ENCODE measurements at regions of chr4 and their contacts with region 1.

Region 1: GRCh38 chr4:139416073-139416673 is 37.7 kb upstream of the RAB33B start:
- DNase-seq: peak; percentile 28
- ATAC-seq: peak; percentile 50
- H3K4me3 ChIP-seq: no peak overlapping the region
- H3K27ac ChIP-seq: no peak overlapping the region
- H3K4me1 ChIP-seq: no peaks in the 10 kb centered on the region; the same call in 1 of the 2 replicates
- H3K27me3 ChIP-seq: no peaks in the 10 kb centered on the region
- CTCF ChIP-seq: peak; percentile 63
- EP300 ChIP-seq: no peak
- POLR2A ChIP-seq: no peak
- RAD21 ChIP-seq: no peak

Region 2: DNA sequence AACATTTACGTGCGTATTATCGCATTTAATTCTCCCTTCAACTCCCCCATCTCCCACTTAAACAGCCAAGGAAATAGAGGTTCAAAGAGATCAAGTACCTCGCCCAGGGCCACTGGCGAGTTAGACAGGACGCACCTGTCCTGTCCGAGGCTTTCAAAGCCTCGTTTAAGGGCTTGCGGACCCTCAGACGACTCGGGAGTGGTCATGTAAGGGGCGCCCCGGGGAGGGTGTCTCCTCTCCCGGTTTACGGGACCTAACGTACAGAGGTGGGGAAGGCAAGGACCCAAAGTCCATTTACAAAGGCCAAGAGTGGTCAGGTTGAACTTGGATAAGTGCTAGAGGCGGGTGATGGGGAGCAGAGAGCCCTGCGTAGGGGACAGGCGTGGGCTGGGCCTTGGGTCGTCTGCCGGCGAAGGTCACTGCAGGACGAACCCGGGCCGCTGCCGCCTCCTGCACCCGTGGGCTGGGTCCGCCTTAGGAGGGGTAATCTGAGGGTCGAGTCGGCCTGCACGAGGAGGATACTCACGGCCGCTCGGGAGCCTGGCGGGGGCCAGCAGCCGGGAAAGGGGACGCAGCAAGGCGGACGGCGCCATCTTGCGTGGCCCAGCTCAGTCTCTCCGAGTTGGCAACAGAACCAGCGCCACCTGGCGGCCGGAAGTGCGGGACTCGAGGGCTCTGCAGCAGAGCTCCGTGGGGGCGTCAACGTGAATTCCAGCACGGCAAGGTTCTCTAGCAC is 120.8 kb before region 1 on chr4:
- CTCF ChIA-PET with region 1: no interaction called
- POLR2A ChIA-PET with region 1: no interaction called
- in situ Hi-C with region 1: no loop called
- intact Hi-C with region 1: no loop called
- DNase-seq: peak; percentile 82
- ATAC-seq: peak; percentile 95
- H3K4me3 ChIP-seq: peak overlapping the region; percentile 85 to 93 (median 86)
- H3K27ac ChIP-seq: peak overlapping the region; percentile 92
- H3K4me1 ChIP-seq: peaks cover 54% of the 10 kb centered on the region
- H3K27me3 ChIP-seq: no peaks in the 10 kb centered on the region; a peak in 1 of 5 replicates
- CTCF ChIP-seq: peak; percentile 98
- EP300 ChIP-seq: 0 out of 4 replicates have a peak, but pooled peaks have one; percentile 11 to 41
- POLR2A ChIP-seq: peak; percentile 77 to 79; a peak in 3 of 4 replicates
- RAD21 ChIP-seq: peak; percentile 89

Region 3: DNA sequence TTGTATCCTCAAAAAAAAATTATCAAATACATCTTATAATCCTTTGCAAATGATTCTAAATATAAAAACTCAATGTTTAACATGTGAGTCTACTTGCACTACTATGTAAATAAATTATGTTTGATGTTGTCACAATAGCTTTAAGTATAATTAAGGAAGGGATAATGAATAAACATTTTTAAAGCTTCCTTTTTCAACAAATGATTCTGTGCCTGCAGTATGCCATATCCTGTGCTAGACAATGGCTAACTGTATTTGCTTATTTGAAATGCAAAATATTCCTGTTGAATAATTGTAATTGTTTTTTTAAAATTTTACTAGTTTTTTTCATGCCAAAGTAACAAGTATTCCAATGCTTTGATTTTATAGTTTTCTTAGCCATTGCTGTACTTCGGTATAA is 54.9 kb before region 1 on chr4:
- CTCF ChIA-PET with region 1: no interaction called
- POLR2A ChIA-PET with region 1: no interaction called
- in situ Hi-C with region 1: no loop called
- intact Hi-C with region 1: no loop called
- DNase-seq: no peak
- ATAC-seq: no peak
- H3K4me3 ChIP-seq: no peak overlapping the region
- H3K27ac ChIP-seq: no peak overlapping the region
- H3K4me1 ChIP-seq: no peaks in the 10 kb centered on the region
- H3K27me3 ChIP-seq: no peaks in the 10 kb centered on the region
- CTCF ChIP-seq: no peak
- EP300 ChIP-seq: no peak
- POLR2A ChIP-seq: no peak
- RAD21 ChIP-seq: no peak

Region 4: DNA sequence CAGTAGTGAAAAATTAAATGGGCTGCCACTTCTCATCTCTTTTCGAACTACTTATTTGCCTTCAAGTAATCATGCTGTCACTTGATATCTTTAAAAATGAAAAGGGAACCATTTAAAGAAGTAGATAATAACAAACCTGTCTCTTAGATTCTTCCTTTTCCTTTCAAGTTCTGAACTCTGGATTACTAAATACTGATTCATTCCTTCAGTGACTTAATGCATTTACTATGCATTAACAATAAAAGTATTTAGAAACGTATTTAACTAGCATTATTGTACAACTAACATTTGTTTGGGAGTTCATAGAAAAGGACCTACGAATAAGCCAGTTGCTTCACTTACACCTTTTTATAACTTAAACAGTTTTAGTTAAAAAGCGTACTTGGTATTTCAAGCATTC is 23.4 kb before region 1 on chr4:
- CTCF ChIA-PET with region 1: no interaction called
- POLR2A ChIA-PET with region 1: no interaction called
- in situ Hi-C with region 1: no loop called
- intact Hi-C with region 1: no loop called
- DNase-seq: no peak
- ATAC-seq: no peak
- H3K4me3 ChIP-seq: no peak overlapping the region
- H3K27ac ChIP-seq: no peak overlapping the region
- H3K4me1 ChIP-seq: no peaks in the 10 kb centered on the region
- H3K27me3 ChIP-seq: no peaks in the 10 kb centered on the region; a peak in 1 of 5 replicates
- CTCF ChIP-seq: no peak
- EP300 ChIP-seq: no peak
- POLR2A ChIP-seq: no peak
- RAD21 ChIP-seq: no peak

Region 5: DNA sequence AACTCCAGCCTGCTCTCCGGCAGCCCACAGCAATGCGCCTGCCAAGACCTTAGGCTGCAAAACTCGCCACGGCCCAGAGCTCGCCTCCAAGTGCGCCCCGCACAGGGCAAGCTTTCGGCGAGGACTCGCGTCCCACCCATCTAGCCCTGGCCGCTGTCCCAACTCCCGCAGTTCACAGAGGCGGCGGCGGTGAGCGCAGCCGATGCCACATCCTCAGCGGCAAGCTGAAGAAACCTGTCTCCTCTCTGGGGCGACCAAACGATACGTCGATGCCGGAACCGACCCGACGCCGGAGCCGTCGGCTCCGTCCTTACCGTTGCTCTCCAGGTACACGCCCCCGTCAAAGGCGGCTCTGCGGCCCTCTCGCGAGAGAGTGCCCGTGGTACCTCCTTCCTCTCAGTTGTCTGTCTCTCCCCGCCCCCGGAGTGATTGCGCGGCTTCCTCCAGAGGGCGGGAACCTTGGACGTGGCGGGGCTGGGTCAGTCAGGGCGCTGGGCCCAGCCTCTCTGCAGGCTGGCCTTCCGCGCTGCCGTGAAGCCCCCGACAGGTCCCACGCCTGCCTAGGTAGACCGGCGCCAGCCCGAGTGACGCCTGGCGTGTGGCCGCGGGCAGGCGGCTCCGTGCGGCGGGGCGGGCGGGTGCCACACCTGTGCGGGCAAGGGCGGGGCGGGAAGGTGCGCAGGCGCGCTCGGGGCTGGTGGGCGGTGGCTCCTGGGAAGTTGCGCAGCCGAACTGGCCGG is 37.4 kb after region 1 on chr4:
- CTCF ChIA-PET with region 1: interaction called, 4 read pairs
- POLR2A ChIA-PET with region 1: no interaction called
- in situ Hi-C with region 1: no loop called
- intact Hi-C with region 1: loop called (anchors 1 kb)
- DNase-seq: peak; percentile 94
- ATAC-seq: peak; percentile 92
- H3K4me3 ChIP-seq: peak overlapping the region; percentile 68 to 95 (median 93)
- H3K27ac ChIP-seq: peak overlapping the region; percentile 97
- H3K4me1 ChIP-seq: peaks cover 58% of the 10 kb centered on the region
- H3K27me3 ChIP-seq: no peaks in the 10 kb centered on the region; a peak in 1 of 5 replicates
- CTCF ChIP-seq: peak; percentile 58; the same call in 1 of the 2 replicates
- EP300 ChIP-seq: no peak
- POLR2A ChIP-seq: peak; percentile 86 to 92
- RAD21 ChIP-seq: 0 out of 2 replicates have a peak, but pooled peaks have one; percentile 3

Region 6: GRCh38 chr4:139509727-139510410 is 93.7 kb after region 1 on chr4:
- CTCF ChIA-PET with region 1: interaction called, 5 read pairs
- POLR2A ChIA-PET with region 1: no interaction called
- in situ Hi-C with region 1: loop called (anchors 10 kb)
- intact Hi-C with region 1: loop called (anchors 1 kb)
- DNase-seq: peak; percentile 53
- ATAC-seq: peak; percentile 98
- H3K4me3 ChIP-seq: no peak overlapping the region
- H3K27ac ChIP-seq: no peak overlapping the region
- H3K4me1 ChIP-seq: no peaks in the 10 kb centered on the region
- H3K27me3 ChIP-seq: no peaks in the 10 kb centered on the region
- CTCF ChIP-seq: peak; percentile 82
- EP300 ChIP-seq: no peak
- POLR2A ChIP-seq: no peak
- RAD21 ChIP-seq: 0 out of 2 replicates have a peak, but pooled peaks have one; percentile 30

Region 7: GRCh38 chr4:139530833-139531427 is 114.8 kb after region 1 on chr4:
- CTCF ChIA-PET with region 1: interaction called, 12 read pairs
- POLR2A ChIA-PET with region 1: no interaction called
- in situ Hi-C with region 1: no loop called
- intact Hi-C with region 1: loop called (anchors 1 kb)
- DNase-seq: peak; percentile 35
- ATAC-seq: peak; percentile 90
- H3K4me3 ChIP-seq: no peak overlapping the region
- H3K27ac ChIP-seq: no peak overlapping the region
- H3K4me1 ChIP-seq: peaks cover 10% of the 10 kb centered on the region
- H3K27me3 ChIP-seq: no peaks in the 10 kb centered on the region
- CTCF ChIP-seq: peak; percentile 80
- EP300 ChIP-seq: no peak
- POLR2A ChIP-seq: no peak
- RAD21 ChIP-seq: no peak

Measured in HepG2 (cell line).